Posterior vena cava (tissue), 2 donors: ENCODE measurements at regions of chr2 and their contacts with region 1.

Region 1: DNA sequence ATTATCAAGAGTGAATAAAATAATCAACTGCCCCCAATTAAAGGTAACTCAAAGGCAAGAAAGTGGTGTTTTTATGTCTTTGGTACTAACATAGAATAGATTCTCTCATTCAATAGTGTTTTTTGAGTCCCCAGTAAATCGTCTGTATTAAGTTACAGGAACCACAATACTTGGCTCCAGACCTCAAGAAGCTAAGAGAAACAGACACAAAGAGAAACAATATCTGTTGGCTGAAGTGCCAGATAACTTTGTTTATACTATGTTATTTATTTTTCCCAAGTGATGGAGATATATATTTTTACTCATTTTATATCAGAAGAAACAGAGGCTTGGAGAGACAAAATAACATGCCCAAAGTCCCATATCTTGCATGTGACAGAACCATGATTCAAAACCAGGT is 201.7 kb upstream of the HNRNPA3 start:
- DNase-seq: no peak

Region 2: GRCh38 chr2:176892676-176893226 is 118.1 kb before region 1 on chr2:
- intact Hi-C with region 1: no loop called
- DNase-seq: no peak

Region 3: GRCh38 chr2:177029480-177029879 is 18.6 kb after region 1 on chr2:
- intact Hi-C with region 1: loop called in 1 of 2 experiments (anchors 2 kb)
- DNase-seq: no peak